GM13977 (cell line): ENCODE measurements at regions of chr1 and their contacts with region 1.

Region 1: DNA sequence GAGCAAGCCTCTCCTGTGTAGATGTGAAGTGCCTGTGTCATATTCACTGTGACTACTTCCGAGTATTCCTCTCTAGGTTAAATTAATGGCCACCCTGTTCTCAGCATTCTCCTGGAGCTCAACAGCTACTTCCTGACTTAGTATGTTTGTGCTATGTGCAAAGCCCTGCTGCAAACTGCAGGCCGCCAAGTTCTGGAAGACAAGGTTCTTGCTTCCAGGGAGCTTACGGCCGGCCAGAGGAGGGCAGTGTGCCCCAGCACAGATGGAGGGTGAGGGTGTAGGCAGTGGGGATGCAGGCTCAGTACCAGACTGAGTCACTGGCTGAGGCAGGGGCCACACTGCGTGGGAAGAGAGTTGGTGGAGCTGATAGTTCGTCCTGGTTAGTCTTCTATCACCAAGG is 43.2 kb downstream of the ELK4 start:
- DNase-seq: no peak
- CTCF ChIP-seq: peak; percentile 68

Region 2: DNA sequence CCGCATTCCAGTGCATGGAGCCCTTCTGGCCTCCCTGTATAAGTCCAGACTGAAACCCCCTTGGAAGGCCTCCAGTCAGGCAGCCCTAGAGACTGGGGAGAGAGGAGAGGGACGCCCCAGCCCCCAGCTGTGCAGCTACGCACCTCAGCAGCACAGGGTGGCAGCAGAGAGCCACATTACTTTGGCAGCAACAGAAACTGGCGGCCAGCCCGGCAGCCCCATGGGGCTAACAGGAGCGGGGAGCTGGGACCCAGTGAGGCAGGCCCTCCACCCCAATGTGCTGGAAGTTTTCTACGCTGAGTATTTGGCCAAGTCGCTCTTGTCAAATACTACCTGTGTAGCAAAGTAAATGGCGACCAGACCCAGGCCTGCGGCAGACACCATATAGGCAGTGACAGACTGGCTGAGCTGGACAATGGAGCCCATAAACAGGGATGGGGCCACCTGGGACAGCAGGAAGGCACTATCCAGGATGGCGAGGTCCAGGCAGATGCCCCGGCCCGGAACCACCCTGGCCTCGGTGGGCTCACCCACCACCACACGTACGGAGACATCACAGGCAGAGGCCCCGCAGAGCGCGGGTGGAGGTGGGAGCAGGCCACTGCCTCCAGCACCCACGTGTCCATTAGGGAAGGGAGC is 70.4 kb after region 1 on chr1:
- in situ Hi-C with region 1: loop called (anchors 10 kb)
- DNase-seq: peak; percentile 91
- CTCF ChIP-seq: peak; percentile 97